Psoas muscle (tissue), 8 donors: ENCODE measurements at regions of chr12 and their contacts with region 1.

Region 1: DNA sequence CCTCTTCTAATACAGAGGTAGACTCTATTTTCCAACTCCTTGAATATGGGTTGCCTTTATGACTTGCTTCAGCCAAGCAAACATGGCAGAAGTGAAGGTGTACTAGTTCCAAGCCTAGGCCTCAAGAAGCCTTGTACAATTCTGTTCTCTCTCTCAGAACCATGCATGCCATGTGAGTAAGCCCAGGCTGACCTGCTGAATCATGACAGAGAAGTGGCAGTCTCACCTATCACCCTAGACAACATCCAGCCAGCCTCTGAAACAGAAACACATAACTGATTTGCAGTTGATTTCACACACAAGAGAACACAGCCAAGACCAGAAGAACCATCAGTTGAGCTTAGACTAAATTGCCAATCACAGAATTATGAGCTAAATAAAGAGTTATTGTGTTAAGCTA is 157.2 kb downstream of the GARIN6 start:
- DNase-seq: no peak
- ATAC-seq: no peak
- H3K4me3 ChIP-seq: no peak overlapping the region
- H3K27ac ChIP-seq: no peak overlapping the region
- H3K4me1 ChIP-seq: no peaks in the 10 kb centered on the region
- H3K27me3 ChIP-seq: no peaks in the 10 kb centered on the region
- CTCF ChIP-seq: no peak

Region 2: GRCh38 chr12:99157946-99158345 is 646.8 kb before region 1 on chr12:
- intact Hi-C with region 1: loop called in 1 of 2 experiments (anchors 10 kb)
- DNase-seq: no peak
- ATAC-seq: no peak
- H3K4me3 ChIP-seq: no peak overlapping the region
- H3K27ac ChIP-seq: no peak overlapping the region
- H3K4me1 ChIP-seq: no peaks in the 10 kb centered on the region
- H3K27me3 ChIP-seq: no peaks in the 10 kb centered on the region
- CTCF ChIP-seq: no peak

Region 3: DNA sequence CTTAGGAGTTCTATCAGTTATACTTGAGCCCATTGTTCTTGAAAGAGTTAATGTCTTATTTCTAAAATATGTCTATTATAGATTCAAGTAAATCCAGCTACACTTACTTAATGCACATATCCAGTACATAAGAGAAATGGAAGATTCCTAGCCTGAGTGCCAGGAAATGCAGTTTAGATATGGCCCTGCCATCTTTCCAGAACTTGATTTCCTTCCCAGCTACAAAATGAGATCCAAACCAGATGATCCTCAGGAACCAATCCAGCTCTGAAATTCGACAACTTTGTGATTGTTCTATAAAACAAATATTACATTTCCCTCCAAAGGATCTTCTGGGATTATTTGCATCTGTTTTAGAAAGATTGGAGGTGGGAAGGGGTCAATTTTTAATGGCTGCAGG is 474.5 kb before region 1 on chr12:
- intact Hi-C with region 1: no loop called
- DNase-seq: no peak
- ATAC-seq: no peak
- H3K4me3 ChIP-seq: no peak overlapping the region
- H3K27ac ChIP-seq: no peak overlapping the region
- H3K4me1 ChIP-seq: no peaks in the 10 kb centered on the region
- H3K27me3 ChIP-seq: no peaks in the 10 kb centered on the region
- CTCF ChIP-seq: no peak